ENCODE measurements at regions of chr12 and their contacts with region 1.

Region 1: GRCh38 chr12:21296751-21297406 is 37.8 kb downstream of the SLCO1A2 start:
- DNase-seq: no peak

Region 2: DNA sequence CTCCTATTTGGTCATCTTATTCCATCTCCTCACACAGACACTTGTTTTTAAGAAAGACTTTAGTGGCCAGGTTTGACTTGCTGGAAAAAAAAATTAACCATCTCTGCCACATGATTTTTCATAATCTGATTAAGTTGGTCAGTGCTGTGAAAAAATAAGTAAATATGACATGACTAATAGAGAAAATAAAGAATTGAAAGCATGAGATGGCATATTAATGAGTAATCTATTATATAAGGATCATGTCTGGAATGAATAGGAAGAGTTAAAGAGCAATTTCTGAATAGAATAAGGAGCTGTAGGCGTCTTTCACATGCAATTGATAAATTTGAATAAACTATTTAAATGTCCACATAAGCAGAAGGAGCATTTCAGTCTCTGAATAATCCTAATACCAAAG is 178.1 kb before region 1 on chr12:
- intact Hi-C with region 1: no loop called
- DNase-seq: no peak

Region 3: DNA sequence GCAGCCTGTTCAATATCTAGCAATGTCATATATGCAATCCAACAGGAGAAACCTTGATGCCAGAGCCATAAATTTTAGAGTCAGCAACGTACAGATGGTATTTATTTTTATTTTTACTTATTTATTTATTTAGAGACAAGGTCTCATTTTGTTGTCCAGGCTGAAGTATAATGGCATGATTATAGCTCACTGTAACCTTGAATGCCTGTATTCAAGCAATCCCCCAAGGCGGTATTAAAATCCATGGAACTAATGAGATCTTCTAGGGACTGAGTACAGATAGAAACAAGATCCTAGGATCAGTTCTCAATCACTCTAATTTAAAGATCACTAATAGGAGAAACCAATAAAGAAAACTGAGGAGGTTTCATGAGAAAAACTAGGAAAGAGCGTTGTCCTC is 76.6 kb before region 1 on chr12:
- intact Hi-C with region 1: no loop called
- DNase-seq: no peak

Region 4: DNA sequence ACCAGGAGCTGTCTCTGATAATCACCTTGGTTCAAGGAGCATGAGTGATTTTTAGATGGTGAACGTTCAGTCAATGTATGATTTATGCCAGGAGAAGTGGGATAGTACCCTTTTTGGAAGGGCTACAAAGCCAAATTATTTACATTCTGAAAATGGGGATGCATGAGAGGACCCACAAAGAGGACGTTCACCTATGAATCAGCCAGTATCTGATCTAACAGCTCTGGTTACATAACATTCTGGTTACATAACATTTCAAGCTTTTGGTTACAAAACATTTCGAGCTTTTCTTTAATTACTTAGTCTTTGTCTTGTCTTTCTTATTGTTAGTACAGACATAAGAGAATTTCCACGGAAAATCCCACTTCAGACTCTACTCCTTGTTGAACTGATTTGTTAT is 30.9 kb before region 1 on chr12:
- intact Hi-C with region 1: no loop called
- DNase-seq: no peak

Region 5: DNA sequence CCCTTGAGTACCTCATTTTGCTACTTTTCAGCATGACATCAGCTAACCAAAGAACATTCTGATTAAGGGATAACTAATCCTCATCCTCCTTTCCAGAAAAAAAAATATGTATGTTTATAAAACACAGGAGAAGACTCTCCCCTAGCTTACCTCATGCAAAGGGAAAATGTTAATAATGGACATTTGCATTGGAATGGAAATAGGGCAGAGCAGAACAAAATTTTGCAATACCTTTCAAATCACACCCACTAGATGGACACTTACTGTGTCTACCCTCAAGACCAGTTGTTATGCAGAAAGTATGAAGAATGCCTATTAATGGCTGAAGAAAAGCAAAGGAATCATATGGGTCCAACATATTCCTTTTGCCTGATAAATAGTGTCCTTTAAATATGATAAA is 46.8 kb after region 1 on chr12:
- intact Hi-C with region 1: loop called in 1 of 2 experiments (anchors 2 kb)
- DNase-seq: no peak

Region 6: GRCh38 chr12:21384261-21384660 is 87.4 kb after region 1 on chr12:
- intact Hi-C with region 1: no loop called
- DNase-seq: no peak